HepG2 (cell line): ENCODE measurements at regions of chr1 and their contacts with region 1.

Region 1: DNA sequence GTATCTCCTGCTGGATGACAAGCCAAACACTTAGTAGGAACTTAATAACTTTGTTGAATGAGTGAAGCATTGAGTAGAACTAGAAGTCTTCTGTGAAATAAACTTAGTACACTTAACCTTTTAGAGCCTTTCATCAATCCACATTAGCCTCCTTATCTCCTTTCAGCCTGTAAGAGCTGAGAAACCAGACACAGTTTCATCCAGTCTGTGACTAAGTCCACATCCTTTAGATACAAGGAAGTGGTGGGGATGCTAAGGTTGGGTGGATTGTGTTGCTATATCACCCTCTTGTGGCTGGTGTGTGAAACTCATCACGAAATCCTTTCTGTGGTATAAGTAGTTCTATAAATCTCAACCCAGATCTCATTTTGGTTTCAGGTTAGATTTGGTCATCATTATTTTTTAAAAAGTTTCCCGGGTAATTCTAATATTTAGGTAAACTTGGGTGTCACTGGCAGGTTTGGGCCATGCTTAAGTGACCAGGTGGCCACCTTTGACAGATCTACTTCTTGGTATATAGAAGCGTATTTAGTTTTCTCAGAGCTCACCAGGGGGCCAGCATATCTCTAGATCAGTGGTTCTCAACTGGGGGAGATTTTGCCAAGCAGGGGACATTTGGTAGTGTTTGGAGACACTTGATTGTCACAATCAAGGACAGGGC is 27.8 kb upstream of the CD84 start:
- DNase-seq: peak; percentile 63
- ATAC-seq: peak; percentile 89
- H3K4me3 ChIP-seq: no peak overlapping the region
- H3K27ac ChIP-seq: no peak overlapping the region
- H3K4me1 ChIP-seq: no peaks in the 10 kb centered on the region
- H3K27me3 ChIP-seq: no peaks in the 10 kb centered on the region
- CTCF ChIP-seq: peak; percentile 85
- EP300 ChIP-seq: no peak
- POLR2A ChIP-seq: no peak
- RAD21 ChIP-seq: peak; percentile 63

Region 2: GRCh38 chr1:160428655-160429054 is 178.5 kb before region 1 on chr1:
- CTCF ChIA-PET with region 1: interaction called, 37 read pairs
- POLR2A ChIA-PET with region 1: no interaction called
- in situ Hi-C with region 1: loop called (anchors 5 kb)
- intact Hi-C with region 1: loop called (anchors 1 kb)
- DNase-seq: no peak
- ATAC-seq: peak; percentile 80
- H3K4me3 ChIP-seq: no peak overlapping the region
- H3K27ac ChIP-seq: no peak overlapping the region
- H3K4me1 ChIP-seq: no peaks in the 10 kb centered on the region
- H3K27me3 ChIP-seq: no peaks in the 10 kb centered on the region; a peak in 1 of 5 replicates
- CTCF ChIP-seq: peak; percentile 72
- EP300 ChIP-seq: no peak
- POLR2A ChIP-seq: no peak
- RAD21 ChIP-seq: 0 out of 2 replicates have a peak, but pooled peaks have one; percentile 39

Region 3: DNA sequence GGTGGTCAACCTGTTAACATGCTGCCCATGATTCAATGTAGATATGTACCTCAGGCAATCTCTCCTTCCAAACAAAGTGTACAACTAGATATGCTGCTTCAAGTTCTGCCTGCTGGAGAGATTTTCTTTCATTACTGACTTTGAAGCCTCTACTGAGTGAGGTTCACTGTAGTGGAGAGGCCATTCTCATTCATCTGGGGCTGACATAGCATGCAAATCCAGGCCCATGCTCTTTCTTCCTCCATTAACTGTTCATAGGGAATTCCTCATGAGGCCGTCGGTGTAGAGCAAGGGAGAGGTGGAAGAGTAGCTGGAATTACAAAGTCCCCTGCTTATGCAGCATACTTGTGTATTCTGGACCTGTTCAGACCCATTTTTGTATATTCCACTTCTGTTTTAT is 168.2 kb before region 1 on chr1:
- CTCF ChIA-PET with region 1: no interaction called
- POLR2A ChIA-PET with region 1: no interaction called
- in situ Hi-C with region 1: no loop called
- intact Hi-C with region 1: no loop called
- DNase-seq: no peak
- ATAC-seq: no peak
- H3K4me3 ChIP-seq: no peak overlapping the region
- H3K27ac ChIP-seq: no peak overlapping the region
- H3K4me1 ChIP-seq: no peaks in the 10 kb centered on the region
- H3K27me3 ChIP-seq: no peaks in the 10 kb centered on the region
- CTCF ChIP-seq: no peak
- EP300 ChIP-seq: no peak
- POLR2A ChIP-seq: no peak
- RAD21 ChIP-seq: no peak

Region 4: GRCh38 chr1:160494620-160495019 is 112.5 kb before region 1 on chr1:
- CTCF ChIA-PET with region 1: interaction called, 21 read pairs
- POLR2A ChIA-PET with region 1: no interaction called
- in situ Hi-C with region 1: loop called (anchors 5 kb)
- intact Hi-C with region 1: loop called (anchors 1 kb)
- DNase-seq: peak; percentile 20
- ATAC-seq: peak; percentile 79
- H3K4me3 ChIP-seq: no peak overlapping the region
- H3K27ac ChIP-seq: no peak overlapping the region
- H3K4me1 ChIP-seq: no peaks in the 10 kb centered on the region
- H3K27me3 ChIP-seq: no peaks in the 10 kb centered on the region
- CTCF ChIP-seq: peak; percentile 64
- EP300 ChIP-seq: no peak
- POLR2A ChIP-seq: no peak
- RAD21 ChIP-seq: no peak

Region 5: GRCh38 chr1:160544647-160545046 is 62.5 kb before region 1 on chr1:
- CTCF ChIA-PET with region 1: no interaction called
- POLR2A ChIA-PET with region 1: no interaction called
- in situ Hi-C with region 1: no loop called
- intact Hi-C with region 1: loop called (anchors 2 kb)
- DNase-seq: no peak
- ATAC-seq: peak; percentile 73
- H3K4me3 ChIP-seq: no peak overlapping the region
- H3K27ac ChIP-seq: no peak overlapping the region
- H3K4me1 ChIP-seq: peaks cover 39% of the 10 kb centered on the region
- H3K27me3 ChIP-seq: no peaks in the 10 kb centered on the region
- CTCF ChIP-seq: peak; percentile 40
- EP300 ChIP-seq: no peak
- POLR2A ChIP-seq: no peak
- RAD21 ChIP-seq: no peak

Region 6: DNA sequence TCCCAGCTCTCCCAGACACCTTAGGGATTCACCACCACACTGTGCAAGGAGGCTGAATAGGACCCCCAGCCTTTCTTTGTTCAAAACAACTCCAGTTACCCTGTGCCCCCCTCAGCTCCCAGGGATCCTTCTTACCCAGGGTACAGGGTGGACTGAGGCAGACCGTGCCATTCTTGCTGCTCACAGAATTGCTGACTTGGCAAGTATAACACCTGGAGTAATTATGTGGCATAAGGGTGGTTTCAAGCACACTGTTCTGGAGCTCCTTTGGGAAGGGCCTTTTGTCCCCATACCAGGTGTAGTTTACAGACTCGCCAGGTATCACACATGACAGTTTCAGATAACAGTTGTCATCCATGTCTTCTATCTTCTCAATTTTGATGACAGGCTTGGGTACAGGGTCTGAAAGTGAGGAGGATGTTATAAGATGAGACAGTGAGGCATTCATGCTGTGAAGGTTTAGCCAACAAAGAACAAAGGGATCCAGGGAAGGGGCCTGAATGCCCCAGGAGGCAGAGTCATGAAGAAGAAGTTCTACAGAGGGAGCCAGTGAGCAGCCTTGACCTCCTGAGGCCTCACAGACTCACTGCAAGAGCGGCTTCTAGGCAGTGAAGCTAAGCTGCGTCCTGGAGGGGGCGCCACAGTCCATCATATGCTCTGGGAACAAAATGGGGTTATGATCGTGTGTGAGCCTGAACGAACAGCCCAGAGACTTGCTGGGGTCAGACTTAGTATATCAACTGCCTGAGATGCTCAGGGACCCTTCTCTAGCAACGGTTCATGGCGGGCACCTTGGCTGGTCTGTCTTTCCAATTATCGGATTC is 74.1 kb after region 1 on chr1:
- CTCF ChIA-PET with region 1: no interaction called
- POLR2A ChIA-PET with region 1: no interaction called
- in situ Hi-C with region 1: no loop called
- intact Hi-C with region 1: no loop called
- DNase-seq: peak; percentile 62
- ATAC-seq: peak; percentile 93
- H3K4me3 ChIP-seq: no peak overlapping the region
- H3K27ac ChIP-seq: no peak overlapping the region
- H3K4me1 ChIP-seq: no peaks in the 10 kb centered on the region
- H3K27me3 ChIP-seq: peaks cover 0 to 6% of the 10 kb centered on the region in 2 experiments; a peak in 1 of 5 replicates
- CTCF ChIP-seq: peak; percentile 69
- EP300 ChIP-seq: no peak
- POLR2A ChIP-seq: no peak
- RAD21 ChIP-seq: peak; percentile 39; the same call in 1 of the 2 replicates